ENCODE measurements at regions of chr17 and their contacts with region 1.

Region 1: GRCh38 chr17:75046582-75047289 is at the starts of genes ATP5PD and KCTD2:
- DNase-seq: peak; percentile 93
- H3K4me3 Mint-ChIP-seq: peak within 1 kb of the TSS; percentile 100
- H3K27ac Mint-ChIP-seq: peak within 1 kb of the TSS; percentile 98
- H3K4me1 Mint-ChIP-seq: peaks cover 35% of the 10 kb centered on the region
- H3K27me3 Mint-ChIP-seq: no peaks in the 10 kb centered on the region
- total RNA-seq, gene ATP5PD: 152 and 165 TPM in 2 replicates
- total RNA-seq, gene KCTD2: 21.2 and 22.6 TPM in 2 replicates

Region 2: DNA sequence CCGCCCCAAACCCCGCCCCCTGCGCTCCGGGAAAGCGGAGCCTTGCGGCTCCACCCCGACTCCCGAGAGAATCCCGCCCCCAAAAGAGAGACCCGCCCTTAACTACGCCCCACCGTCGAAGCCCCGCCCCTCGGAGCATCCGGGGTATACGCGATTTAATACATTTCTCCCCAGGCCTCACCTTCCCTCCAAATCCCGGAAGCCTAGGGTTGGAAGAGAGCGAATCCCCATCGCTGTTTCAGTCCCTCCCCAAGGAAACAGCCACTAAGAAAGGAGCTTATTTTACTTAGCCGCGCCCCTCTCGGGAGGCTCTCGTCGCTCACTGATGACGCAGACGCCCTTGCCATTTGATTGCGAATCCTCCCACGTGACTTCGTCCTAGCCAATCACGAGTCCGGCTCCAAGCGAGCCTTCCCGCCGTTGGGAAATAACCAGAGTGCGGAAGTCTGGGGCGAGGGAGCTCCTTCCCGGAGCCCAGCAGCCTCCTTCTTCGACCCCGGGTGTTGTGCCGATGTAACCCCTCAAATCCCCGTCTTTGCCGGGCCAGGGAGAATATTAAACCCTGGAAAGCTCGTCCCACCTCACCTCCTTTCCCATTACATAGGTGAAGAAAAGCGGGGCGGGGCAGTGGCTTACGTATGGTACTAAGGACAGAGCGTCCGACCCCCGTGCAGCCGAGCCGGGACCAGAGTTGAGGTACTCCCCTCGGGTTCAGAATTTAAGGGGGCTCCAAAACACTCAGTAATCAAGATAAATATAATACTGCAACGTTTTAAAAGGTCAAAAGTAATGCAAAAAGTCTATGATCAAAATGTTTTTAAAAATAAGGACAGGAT is 173.5 kb before region 1 on chr17:
- intact Hi-C with region 1: loop called (anchors 2 kb)
- DNase-seq: peak; percentile 98
- H3K4me3 Mint-ChIP-seq: peak overlapping the region; percentile 89
- H3K27ac Mint-ChIP-seq: peak overlapping the region; percentile 87
- H3K4me1 Mint-ChIP-seq: peaks cover 31% of the 10 kb centered on the region
- H3K27me3 Mint-ChIP-seq: peaks cover 5% of the 10 kb centered on the region

Region 3: GRCh38 chr17:75069783-75070182 is 23.0 kb after region 1 on chr17:
- intact Hi-C with region 1: loop called (anchors 2 kb)
- DNase-seq: no peak
- H3K4me3 Mint-ChIP-seq: no peak overlapping the region
- H3K27ac Mint-ChIP-seq: no peak overlapping the region
- H3K4me1 Mint-ChIP-seq: peaks cover 26% of the 10 kb centered on the region
- H3K27me3 Mint-ChIP-seq: no peaks in the 10 kb centered on the region

Region 4: GRCh38 chr17:75131280-75132017 is 84.7 kb after region 1 on chr17 and contains the start of gene NT5C:
- intact Hi-C with region 1: loop called (anchors 1 kb)
- DNase-seq: peak; percentile 70
- H3K4me3 Mint-ChIP-seq: peak within 1 kb of the TSS; percentile 92
- H3K27ac Mint-ChIP-seq: peak within 1 kb of the TSS; percentile 88
- H3K4me1 Mint-ChIP-seq: peaks cover 12% of the 10 kb centered on the region
- H3K27me3 Mint-ChIP-seq: no peaks in the 10 kb centered on the region
- total RNA-seq, gene NT5C: 80.0 and 80.1 TPM in 2 replicates

Region 5: GRCh38 chr17:75182569-75183450 is 136.1 kb after region 1 on chr17 and contains the start of gene SUMO2:
- intact Hi-C with region 1: loop called (anchors 2 kb)
- DNase-seq: peak; percentile 93
- H3K4me3 Mint-ChIP-seq: peak within 1 kb of the TSS; percentile 99
- H3K27ac Mint-ChIP-seq: peak within 1 kb of the TSS; percentile 98
- H3K4me1 Mint-ChIP-seq: peaks cover 38% of the 10 kb centered on the region
- H3K27me3 Mint-ChIP-seq: no peaks in the 10 kb centered on the region
- total RNA-seq, gene SUMO2: 649 and 656 TPM in 2 replicates

Region 6: DNA sequence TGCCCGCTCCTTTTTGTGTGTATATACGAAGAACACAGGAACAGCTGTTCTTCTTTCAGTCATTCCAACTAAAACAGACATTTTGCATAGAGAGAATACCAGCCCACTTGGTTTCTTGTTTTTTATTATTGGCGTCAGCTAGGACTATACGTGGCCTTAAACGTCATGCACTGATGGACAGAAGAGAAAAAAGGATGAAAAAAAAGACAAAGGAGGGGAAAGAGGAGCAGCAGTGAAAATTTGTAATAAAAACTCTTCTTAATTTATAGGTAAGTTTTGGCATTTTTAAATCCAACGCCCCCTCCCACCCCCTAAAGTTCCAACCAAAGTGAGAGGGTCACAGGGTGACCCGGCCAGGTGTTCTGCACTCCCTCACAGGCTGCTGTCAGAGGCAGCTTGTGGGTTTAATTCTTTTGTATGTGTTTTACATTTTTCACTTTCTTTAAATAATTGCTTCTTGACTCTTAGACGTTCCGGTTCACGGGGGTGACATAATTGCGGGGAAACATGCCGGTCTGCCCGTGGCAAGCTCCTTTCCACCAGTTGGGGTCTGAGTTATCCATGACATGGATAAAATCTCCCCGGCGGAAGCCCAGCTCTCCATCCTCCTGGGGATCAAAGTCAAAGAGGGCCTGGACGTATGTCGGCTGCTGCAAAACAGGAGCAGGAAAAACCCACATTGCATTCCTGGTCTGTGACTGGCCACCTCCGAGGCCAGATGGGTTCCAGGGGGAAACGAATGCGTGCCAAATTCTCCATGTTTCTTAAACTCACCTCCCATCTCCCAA is 273.4 kb after region 1 on chr17:
- intact Hi-C with region 1: no loop called
- DNase-seq: no peak
- H3K4me3 Mint-ChIP-seq: no peak overlapping the region
- H3K27ac Mint-ChIP-seq: no peak overlapping the region
- H3K4me1 Mint-ChIP-seq: peaks cover 16% of the 10 kb centered on the region
- H3K27me3 Mint-ChIP-seq: no peaks in the 10 kb centered on the region

Measured in activated T-helper 1 cell treated with anti-CD3 and anti-CD28 coated beads, Interleukin-12 subunit alpha, Interleukin-12 subunit beta, Interleukin-2, Interleukin-4 antibody, amounts not matched to agents 30 ng/mL and 10 ng/mL and 1 ng/mL, durations not matched to agents 14 hours and 24 hours and 36 hours (primary cell).